PC-9 (cell line): ENCODE measurements at regions of chr5 and their contacts with region 1.

Region 1: DNA sequence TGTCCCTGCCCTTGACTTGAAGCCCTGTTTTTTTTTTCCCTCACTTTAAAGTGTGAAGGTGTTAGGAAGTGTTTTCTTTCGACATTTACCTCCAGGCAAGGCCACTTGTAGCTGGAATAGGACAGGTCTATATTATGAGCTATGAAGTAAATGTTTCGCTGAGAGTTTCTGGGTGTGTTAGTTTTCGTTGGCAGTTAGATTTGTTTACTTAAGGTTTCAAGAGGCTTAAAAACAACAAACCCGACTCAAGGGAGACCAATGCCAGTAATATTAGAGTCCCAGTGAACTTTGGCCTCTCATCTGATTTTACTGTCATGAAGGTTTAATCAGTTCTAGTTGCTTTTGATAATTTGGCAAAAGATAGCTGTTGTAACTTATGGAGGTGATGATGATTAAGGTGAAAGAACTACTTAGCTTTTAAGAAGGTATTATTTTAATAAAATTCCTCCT is 25.2 kb downstream of the OCLN start:
- DNase-seq: peak; percentile 52 to 98
- H3K4me3 ChIP-seq: no peak overlapping the region; the same call in 1 of the 2 replicates
- H3K27ac ChIP-seq: peak overlapping the region; percentile 99
- H3K4me1 ChIP-seq: peaks cover 82% of the 10 kb centered on the region
- H3K27me3 ChIP-seq: no peaks in the 10 kb centered on the region
- CTCF ChIP-seq: no peak

Region 2: DNA sequence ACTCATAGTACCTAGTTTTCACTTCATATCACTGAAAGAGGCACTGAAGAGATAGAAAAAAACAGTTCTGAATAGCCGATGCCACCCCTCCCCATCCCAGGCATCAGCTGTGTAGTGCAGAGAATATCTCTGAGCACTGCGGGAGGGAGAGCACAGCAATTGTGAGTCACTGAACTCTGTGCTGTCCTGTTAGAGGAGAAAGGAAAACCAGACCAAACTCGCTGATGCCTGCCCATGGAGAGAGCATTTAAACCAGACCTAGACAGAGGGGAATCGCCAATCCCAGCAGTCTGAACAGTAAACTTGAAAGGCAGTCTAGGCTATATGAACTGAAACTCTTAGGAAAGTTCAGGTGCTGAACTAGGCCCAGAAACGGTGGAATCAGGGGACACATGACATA is 544.1 kb before region 1 on chr5:
- CTCF ChIA-PET with region 1: no interaction called
- POLR2A ChIA-PET with region 1: no interaction called
- intact Hi-C with region 1: no loop called
- DNase-seq: no peak
- H3K4me3 ChIP-seq: no peak overlapping the region
- H3K27ac ChIP-seq: no peak overlapping the region
- H3K4me1 ChIP-seq: no peaks in the 10 kb centered on the region
- H3K27me3 ChIP-seq: no peaks in the 10 kb centered on the region
- CTCF ChIP-seq: no peak

Region 3: DNA sequence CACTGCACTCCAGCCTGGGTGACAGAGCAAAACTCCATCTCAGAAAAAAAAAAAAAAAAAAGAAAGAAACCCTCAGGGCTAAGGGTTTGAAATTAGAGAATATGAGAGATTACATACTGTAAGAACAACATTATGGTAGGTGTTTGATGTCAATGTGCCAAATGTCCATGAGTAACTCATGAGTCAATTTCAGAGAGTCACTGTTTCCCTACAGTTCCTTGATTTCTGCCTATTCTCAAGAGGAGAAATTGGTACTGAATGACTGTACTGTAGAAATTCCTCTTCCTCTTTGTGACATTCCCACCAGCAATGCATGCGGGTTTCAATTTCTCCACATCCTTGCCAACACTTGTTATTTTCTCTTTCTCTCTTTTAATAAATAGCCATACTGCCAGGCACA is 67.7 kb before region 1 on chr5:
- CTCF ChIA-PET with region 1: no interaction called
- POLR2A ChIA-PET with region 1: no interaction called
- intact Hi-C with region 1: no loop called
- DNase-seq: peak in 1 of 2 experiments; percentile 87
- H3K4me3 ChIP-seq: no peak overlapping the region
- H3K27ac ChIP-seq: peak overlapping the region; percentile 67
- H3K4me1 ChIP-seq: peaks cover 13% of the 10 kb centered on the region
- H3K27me3 ChIP-seq: no peaks in the 10 kb centered on the region
- CTCF ChIP-seq: no peak

Region 4: GRCh38 chr5:69492391-69492922 is 25.3 kb before region 1 on chr5 and contains the start of gene OCLN:
- CTCF ChIA-PET with region 1: no interaction called
- POLR2A ChIA-PET with region 1: interaction called, 3 read pairs
- intact Hi-C with region 1: loop called (anchors 2 kb)
- DNase-seq: peak; percentile 83 to 92
- H3K4me3 ChIP-seq: peak within 1 kb of the TSS; percentile 80
- H3K27ac ChIP-seq: peak within 1 kb of the TSS; percentile 99
- H3K4me1 ChIP-seq: peaks cover 44% of the 10 kb centered on the region
- H3K27me3 ChIP-seq: no peaks in the 10 kb centered on the region
- CTCF ChIP-seq: no peak
- total RNA-seq, gene OCLN: 66.5 and 77.4 TPM in 2 replicates

Region 5: DNA sequence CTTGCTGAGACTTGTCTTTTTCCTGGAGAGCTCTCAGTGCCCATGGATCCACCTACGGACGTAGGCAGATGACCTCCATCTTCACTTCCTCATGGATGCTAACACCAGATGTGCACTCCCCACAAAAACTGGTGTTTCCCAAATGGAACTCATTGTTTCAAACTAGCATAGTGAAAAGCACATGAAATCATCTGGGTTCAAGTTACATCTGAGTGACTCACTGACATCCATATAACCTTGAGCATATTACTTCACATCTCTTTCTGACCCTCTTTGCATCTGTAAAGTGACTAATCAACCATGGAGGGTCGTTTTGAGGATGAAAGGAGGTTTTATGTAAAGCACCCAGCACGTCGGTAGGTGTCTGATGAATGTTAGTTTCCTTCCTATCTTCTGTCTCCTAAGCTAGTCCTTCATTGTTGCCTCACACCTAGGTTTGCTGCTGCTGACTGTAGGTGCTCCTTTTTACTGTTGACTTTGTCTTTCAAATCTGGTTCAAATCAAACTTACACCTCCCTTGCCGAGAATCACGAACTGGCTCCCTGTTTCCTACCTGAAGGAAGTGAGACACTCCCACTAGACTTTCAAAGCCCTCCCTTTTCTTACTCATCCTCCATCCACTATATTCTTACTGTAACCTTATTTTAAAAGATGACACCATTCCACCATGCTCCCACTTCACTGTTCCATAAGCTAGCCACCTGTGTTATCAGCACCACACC is 14.9 kb before region 1 on chr5:
- CTCF ChIA-PET with region 1: no interaction called
- POLR2A ChIA-PET with region 1: interaction called, 12 read pairs
- intact Hi-C with region 1: loop called (anchors 2 kb)
- DNase-seq: peak; percentile 16 to 74
- H3K4me3 ChIP-seq: peak overlapping the region; percentile 18; the same call in 1 of the 2 replicates
- H3K27ac ChIP-seq: peak overlapping the region; percentile 96
- H3K4me1 ChIP-seq: peaks cover 73% of the 10 kb centered on the region
- H3K27me3 ChIP-seq: no peaks in the 10 kb centered on the region
- CTCF ChIP-seq: no peak

Region 6: DNA sequence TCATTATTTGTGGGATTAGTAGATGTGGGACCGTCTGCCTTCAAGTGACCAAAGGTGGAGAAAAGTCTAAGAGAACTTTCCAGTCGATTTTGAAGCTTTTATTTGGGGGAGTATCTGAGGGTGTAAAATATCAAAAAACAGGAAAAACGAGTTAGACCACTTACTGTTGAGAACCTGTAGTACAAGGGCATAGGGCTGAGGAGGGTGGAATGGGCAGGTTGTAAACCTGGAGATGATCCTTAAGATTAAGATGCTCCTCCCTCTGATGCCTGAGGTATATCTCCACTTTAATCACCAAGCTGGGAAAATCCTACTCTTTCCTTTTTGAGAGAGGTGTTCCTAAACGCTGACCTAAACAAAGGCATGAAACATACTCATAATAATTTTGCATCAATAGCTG is 10.3 kb after region 1 on chr5:
- CTCF ChIA-PET with region 1: no interaction called
- POLR2A ChIA-PET with region 1: interaction called, 15 read pairs
- intact Hi-C with region 1: no loop called
- DNase-seq: peak; percentile 42 to 91
- H3K4me3 ChIP-seq: peak overlapping the region; percentile 16; the same call in 1 of the 2 replicates
- H3K27ac ChIP-seq: peak overlapping the region; percentile 78
- H3K4me1 ChIP-seq: peaks cover 63% of the 10 kb centered on the region
- H3K27me3 ChIP-seq: no peaks in the 10 kb centered on the region
- CTCF ChIP-seq: no peak